AG04450 (cell line): ENCODE measurements at regions of chr5 and their contacts with region 1.

Region 1: GRCh38 chr5:139881143-139881733 is 85.6 kb downstream of the PSD2 start:
- DNase-seq: no peak
- H3K4me3 ChIP-seq: no peak overlapping the region
- H3K27ac ChIP-seq: no peak overlapping the region
- H3K27me3 ChIP-seq: peaks cover 63% of the 10 kb centered on the region
- CTCF ChIP-seq: no peak

Region 2: DNA sequence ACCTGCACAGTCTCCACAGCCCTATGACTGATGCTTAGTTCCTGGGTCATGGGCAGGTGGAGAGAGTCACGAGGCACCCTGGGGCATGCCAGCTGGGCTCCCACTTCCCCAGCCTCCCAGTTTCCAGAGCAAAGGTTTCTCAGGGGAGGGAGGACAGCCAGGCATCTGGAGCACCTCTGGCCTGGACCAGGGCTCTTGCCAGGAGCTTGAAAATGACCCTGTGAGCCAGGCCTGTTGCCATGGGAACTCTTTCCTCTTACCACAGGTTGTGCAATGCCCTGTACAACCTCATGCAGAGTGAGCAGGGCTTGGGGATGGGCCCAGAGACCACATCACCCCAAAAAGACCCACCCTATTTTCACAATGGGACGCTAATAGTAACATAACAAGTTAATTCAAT is 27.5 kb after region 1 on chr5:
- CTCF ChIA-PET with region 1: no interaction called
- POLR2A ChIA-PET with region 1: interaction called, 10 read pairs
- DNase-seq: no peak
- H3K4me3 ChIP-seq: no peak overlapping the region
- H3K27ac ChIP-seq: no peak overlapping the region
- H3K27me3 ChIP-seq: peaks cover 40% of the 10 kb centered on the region
- CTCF ChIP-seq: no peak